ENCODE measurements at regions of chr13 and their contacts with region 1.

Region 1: GRCh38 chr13:76656500-76656899 is 229.7 kb downstream of the KCTD12 start:
- DNase-seq: no peak
- ATAC-seq: no peak
- H3K4me3 ChIP-seq: no peak overlapping the region
- H3K27ac ChIP-seq: no peak overlapping the region
- H3K4me1 ChIP-seq: no peaks in the 10 kb centered on the region
- H3K27me3 ChIP-seq: no peaks in the 10 kb centered on the region
- CTCF ChIP-seq: no peak

Region 2: DNA sequence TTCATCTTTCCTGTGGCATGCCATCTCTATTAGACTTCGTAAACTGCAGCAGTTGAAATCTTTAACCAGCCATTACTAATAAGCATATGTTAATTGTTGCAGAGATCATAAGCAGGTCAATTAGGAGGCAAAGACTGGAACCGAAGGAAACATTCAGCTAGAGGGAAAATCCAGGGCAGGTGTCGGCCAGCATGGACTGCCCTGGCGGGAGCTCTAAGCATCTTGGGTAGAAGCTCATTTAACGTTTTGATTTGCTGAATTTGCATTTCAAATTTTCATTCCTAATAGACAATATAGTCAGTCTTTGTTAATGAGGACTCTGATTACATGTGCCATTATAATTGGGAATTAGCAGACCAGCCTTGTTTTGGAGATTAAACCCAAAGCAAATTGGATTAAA is 1708.2 kb after region 1 on chr13:
- intact Hi-C with region 1: loop called in 1 of 2 experiments (anchors 5 kb)
- DNase-seq: no peak
- ATAC-seq: no peak
- H3K4me3 ChIP-seq: no peak overlapping the region
- H3K27ac ChIP-seq: no peak overlapping the region
- H3K4me1 ChIP-seq: no peaks in the 10 kb centered on the region
- H3K27me3 ChIP-seq: no peaks in the 10 kb centered on the region
- CTCF ChIP-seq: no peak